ENCODE measurements at regions of chr10 and their contacts with region 1.

Region 1: GRCh38 chr10:112981553-112981952 is 31.5 kb downstream of the TCF7L2 start:
- DNase-seq: peak; percentile 66
- H3K4me3 Mint-ChIP-seq: no peak overlapping the region
- H3K27ac Mint-ChIP-seq: no peak overlapping the region
- H3K4me1 Mint-ChIP-seq: peaks cover 26% of the 10 kb centered on the region
- H3K27me3 Mint-ChIP-seq: peaks cover 65% of the 10 kb centered on the region

Region 2: DNA sequence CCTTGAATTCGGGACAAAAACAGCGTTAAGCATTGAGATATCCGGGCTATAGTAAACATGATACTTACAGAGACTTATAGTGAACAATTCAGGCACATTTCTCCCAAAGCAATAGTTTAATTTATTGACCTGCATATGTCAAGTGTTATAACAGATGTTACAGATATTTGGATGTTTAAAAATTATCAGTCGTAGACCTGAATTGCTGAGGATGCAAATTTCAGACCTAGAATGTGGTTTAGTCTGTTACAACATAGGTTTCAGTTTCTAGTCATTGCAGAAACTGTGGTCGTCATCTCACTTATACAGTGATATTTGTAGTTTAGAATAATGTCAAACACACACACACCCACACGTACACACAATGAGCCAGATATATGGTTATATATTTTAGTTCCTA is 449.4 kb before region 1 on chr10:
- CTCF ChIA-PET with region 1: no interaction called
- POLR2A ChIA-PET with region 1: no interaction called
- intact Hi-C with region 1: loop called (anchors 5 kb)
- DNase-seq: peak; percentile 12
- H3K4me3 Mint-ChIP-seq: peak overlapping the region; percentile 39
- H3K27ac Mint-ChIP-seq: no peak overlapping the region
- H3K4me1 Mint-ChIP-seq: peaks cover 27% of the 10 kb centered on the region
- H3K27me3 Mint-ChIP-seq: peaks cover 2% of the 10 kb centered on the region

Region 3: GRCh38 chr10:112949875-112950507 is 31.6 kb before region 1 on chr10 and contains the start of gene TCF7L2:
- CTCF ChIA-PET with region 1: no interaction called
- POLR2A ChIA-PET with region 1: no interaction called
- intact Hi-C with region 1: loop called (anchors 1 kb)
- DNase-seq: peak; percentile 61
- H3K4me3 Mint-ChIP-seq: peak within 1 kb of the TSS; percentile 85
- H3K27ac Mint-ChIP-seq: no peak within 1 kb of the TSS
- H3K4me1 Mint-ChIP-seq: peaks cover 23% of the 10 kb centered on the region
- H3K27me3 Mint-ChIP-seq: peaks cover 36% of the 10 kb centered on the region
- total RNA-seq, gene TCF7L2: 0.71 to 1.5 TPM

Region 4: DNA sequence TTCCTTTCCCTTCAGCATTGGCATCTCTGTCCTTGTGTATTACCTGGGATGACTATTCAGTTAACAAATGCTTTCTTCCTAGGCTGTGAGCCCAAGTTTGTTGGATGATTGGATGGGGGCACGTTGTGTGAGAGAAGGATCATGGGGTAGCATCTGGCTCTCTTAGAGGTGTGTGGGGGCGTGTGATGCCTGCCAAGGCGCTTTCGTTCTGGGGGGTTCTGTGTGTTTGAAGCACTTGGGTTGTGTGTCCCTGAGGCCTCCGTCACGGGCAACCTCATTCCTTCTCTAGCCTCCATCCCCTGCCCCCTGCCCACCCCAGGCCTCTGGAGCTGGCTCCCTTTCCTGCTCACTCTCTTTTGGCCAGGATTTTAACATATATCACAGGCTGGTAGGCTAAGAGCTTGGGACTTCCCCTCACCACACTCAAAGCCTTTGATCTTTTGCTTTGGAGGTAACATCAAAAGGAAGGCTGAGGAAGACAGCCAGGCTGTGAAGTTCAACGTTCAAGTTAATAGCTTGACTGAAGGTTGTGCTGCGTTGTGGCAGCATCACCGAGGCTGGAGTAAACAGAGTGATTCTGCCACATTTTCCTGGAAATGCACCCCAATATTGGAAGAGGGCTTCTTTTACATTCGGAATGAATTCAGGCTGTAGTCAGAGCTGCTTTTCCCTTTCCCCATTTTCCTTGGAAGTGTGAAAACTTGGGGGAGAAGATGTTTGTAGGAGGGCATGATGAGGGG is 25.6 kb after region 1 on chr10:
- CTCF ChIA-PET with region 1: no interaction called
- POLR2A ChIA-PET with region 1: interaction called, 3 read pairs
- intact Hi-C with region 1: loop called (anchors 1 kb)
- DNase-seq: peak; percentile 42
- H3K4me3 Mint-ChIP-seq: peak overlapping the region; percentile 50
- H3K27ac Mint-ChIP-seq: no peak overlapping the region
- H3K4me1 Mint-ChIP-seq: peaks cover 24% of the 10 kb centered on the region
- H3K27me3 Mint-ChIP-seq: peaks cover 71% of the 10 kb centered on the region

Region 5: DNA sequence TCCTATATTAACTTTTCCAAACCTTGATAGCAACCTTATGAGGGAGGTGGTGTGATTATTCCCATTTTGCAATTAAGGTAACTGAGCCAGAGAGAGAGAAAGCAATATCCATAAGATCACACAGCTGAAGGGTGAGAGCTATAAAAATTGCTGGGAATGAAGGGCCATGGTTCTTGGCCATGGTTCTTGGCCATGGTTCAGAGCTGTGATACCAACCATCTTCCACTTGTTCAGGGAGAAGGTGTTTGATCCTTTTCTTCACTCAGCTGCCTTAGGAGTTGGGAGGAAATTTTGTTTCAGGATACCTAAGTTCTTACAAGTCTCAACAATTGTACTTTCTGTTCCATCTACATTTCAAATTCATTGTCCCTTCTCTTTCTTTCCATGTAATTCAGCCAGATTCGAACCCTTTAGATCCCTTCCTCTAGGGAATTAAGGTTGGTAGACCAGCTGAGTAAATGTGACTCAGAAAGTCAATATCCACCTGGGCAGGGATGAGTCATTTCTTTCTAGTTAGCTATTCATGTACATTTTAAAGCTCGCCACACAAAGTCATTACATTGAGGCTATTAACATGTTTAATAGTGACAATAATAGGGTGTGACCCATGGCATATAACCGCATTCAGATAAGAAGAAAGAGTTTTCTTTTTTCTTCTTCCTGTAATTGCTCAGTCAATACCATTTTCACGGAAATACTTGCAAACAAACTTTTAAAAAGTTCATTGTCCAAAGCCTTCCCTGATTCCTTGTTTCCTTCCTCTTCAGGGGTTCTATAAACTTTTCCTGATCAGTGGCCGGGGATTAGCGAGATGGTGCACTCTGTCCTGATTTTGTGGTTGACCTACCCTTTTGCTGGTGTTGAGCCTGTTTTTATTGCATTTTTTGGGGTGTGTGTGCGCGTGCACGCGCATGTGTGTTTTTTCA is 111.9 kb after region 1 on chr10:
- CTCF ChIA-PET with region 1: no interaction called
- POLR2A ChIA-PET with region 1: no interaction called
- intact Hi-C with region 1: loop called (anchors 1 kb)
- DNase-seq: no peak
- H3K4me3 Mint-ChIP-seq: no peak overlapping the region
- H3K27ac Mint-ChIP-seq: no peak overlapping the region
- H3K4me1 Mint-ChIP-seq: peaks cover 16% of the 10 kb centered on the region
- H3K27me3 Mint-ChIP-seq: no peaks in the 10 kb centered on the region

Region 6: GRCh38 chr10:113381981-113382509 is 400.5 kb after region 1 on chr10:
- CTCF ChIA-PET with region 1: no interaction called
- POLR2A ChIA-PET with region 1: no interaction called
- intact Hi-C with region 1: no loop called
- DNase-seq: peak; percentile 10
- H3K4me3 Mint-ChIP-seq: peak overlapping the region; percentile 3
- H3K27ac Mint-ChIP-seq: no peak overlapping the region
- H3K4me1 Mint-ChIP-seq: peaks cover 20% of the 10 kb centered on the region
- H3K27me3 Mint-ChIP-seq: peaks cover 3% of the 10 kb centered on the region

Measured in activated CD4-positive, alpha-beta memory T cell treated with anti-CD3 and anti-CD28 coated beads for 36 hours (primary cell).